CD8-positive, alpha-beta memory T cell (primary cell): ENCODE measurements at regions of chr11 and their contacts with region 1.

Region 1: DNA sequence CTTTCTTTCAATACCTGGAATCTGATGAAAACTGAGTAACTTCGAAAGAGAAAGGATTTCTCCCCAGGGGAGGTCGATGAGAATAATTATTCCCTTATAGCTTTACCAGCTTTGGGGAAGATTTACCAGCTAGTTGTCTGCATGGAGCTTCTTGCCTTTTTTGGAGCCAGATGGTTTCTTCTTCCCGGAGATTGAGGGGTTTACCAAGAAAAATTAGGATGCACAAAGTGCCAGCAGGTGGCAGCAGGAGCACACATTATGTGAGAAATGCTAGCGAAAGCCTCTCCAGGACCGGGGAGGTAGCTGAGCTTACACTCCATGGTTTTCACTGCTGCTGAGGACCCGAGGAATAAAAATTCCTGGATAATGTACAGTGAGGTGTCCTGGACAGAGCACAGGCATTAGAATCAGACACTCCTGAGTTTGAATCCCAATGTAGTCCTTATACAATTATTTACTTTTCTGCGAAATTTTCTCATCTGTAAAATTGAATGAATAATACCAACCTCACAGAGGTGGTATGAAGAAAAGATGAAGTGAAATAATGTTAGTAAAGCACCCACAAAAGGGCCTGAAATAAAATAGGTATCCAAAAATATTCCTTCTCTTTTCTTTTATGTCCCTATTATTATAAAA is 46.0 kb upstream of the PARVA start:
- DNase-seq: peak; percentile 50 to 77 (median 63)
- H3K4me3 ChIP-seq: no peak overlapping the region
- H3K4me3 Mint-ChIP-seq: no peak overlapping the region
- H3K27ac ChIP-seq: no peak overlapping the region
- H3K27ac Mint-ChIP-seq: no peak overlapping the region
- H3K4me1 ChIP-seq: no peaks in the 10 kb centered on the region
- H3K4me1 Mint-ChIP-seq: peaks cover 4 to 13% (median 5%) of the 10 kb centered on the region in 3 donors
- H3K27me3 ChIP-seq: no peaks in the 10 kb centered on the region
- H3K27me3 Mint-ChIP-seq: no peaks in the 10 kb centered on the region

Region 2: DNA sequence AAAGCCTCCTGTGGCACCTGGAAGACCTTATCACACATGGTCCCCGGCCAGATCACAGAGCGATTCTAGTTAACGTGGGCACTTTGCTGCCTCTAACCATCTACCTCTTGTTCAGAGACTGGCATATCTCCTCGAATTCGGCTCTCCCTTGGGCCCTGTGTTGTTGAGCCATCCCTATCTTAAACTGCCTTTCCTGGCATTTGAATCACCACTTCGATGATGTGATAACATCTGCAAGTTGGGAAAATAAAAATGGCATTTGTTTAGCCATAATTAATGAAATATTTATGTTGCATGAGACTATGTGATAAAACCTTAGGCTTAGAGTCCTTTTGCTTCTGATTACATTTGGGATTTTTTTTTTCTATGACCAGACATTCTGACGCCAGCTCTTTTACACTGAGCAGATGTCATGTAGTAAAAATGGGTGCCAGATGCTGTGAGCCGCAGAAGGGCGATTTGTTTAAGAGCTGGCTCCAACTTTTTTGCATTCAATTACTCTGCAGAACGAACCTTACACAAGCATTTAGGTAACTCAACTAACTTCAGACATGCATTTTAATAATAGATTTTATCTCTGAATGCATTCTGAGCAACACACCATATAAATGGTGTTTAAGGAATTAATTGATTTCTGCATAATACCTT is 12.4 kb before region 1 on chr11:
- CTCF ChIA-PET with region 1: interaction called, 12 read pairs
- POLR2A ChIA-PET with region 1: no interaction called
- DNase-seq: no peak
- H3K4me3 ChIP-seq: no peak overlapping the region
- H3K4me3 Mint-ChIP-seq: no peak overlapping the region
- H3K27ac ChIP-seq: no peak overlapping the region
- H3K27ac Mint-ChIP-seq: no peak overlapping the region
- H3K4me1 ChIP-seq: no peaks in the 10 kb centered on the region
- H3K4me1 Mint-ChIP-seq: peaks cover 6 to 12% (median 7%) of the 10 kb centered on the region in 3 donors
- H3K27me3 ChIP-seq: no peaks in the 10 kb centered on the region
- H3K27me3 Mint-ChIP-seq: peaks cover 2 to 6% of the 10 kb centered on the region in 2 donors

Region 3: DNA sequence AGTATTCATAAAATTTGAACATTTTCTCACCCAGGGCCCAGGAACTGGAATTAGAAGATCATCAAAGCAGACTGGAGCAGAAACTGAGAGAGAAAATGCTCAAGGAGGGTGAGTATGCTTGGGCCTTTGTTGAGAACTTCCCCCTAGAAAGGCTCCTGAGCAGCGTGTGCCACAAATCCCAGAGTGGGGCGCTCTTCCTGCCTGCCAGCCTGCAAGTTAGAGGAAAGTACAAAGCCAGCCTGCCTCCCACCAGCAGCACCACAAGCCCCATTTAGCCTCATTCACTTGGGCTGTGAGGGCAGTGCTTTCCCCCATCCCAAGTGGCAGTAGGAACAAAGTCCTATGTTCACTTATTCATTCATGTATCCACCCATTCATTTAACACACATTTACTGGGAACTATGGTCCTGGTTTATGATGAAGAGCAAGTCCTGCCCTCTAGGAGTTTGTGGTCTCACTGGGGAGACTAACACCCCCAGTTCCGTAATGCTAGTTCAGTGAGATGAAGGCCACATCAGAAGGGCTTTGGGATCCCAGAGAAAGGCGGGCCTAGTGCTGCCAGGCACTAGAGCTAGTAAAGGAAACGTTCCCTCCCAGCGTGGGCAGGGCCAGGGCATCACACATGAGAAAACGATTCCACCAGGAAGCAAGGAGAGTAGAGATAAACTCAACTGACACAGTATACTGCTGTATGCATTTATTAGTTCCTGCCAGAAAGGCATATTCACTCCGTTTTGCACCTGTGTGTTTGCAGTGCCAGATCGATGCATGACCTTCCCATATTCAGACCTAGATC is 23.6 kb after region 1 on chr11:
- CTCF ChIA-PET with region 1: interaction called, 12 read pairs
- POLR2A ChIA-PET with region 1: no interaction called
- DNase-seq: no peak
- H3K4me3 ChIP-seq: no peak overlapping the region
- H3K4me3 Mint-ChIP-seq: no peak overlapping the region
- H3K27ac ChIP-seq: no peak overlapping the region
- H3K27ac Mint-ChIP-seq: peak overlapping the region in 3 of 8 donors; percentile 25 to 52 (median 30)
- H3K4me1 ChIP-seq: peaks cover 24% of the 10 kb centered on the region
- H3K4me1 Mint-ChIP-seq: peaks cover 20 to 36% (median 35%) of the 10 kb centered on the region in 3 donors
- H3K27me3 ChIP-seq: no peaks in the 10 kb centered on the region
- H3K27me3 Mint-ChIP-seq: peaks cover 0 to 1% of the 10 kb centered on the region in 2 donors

Region 4: DNA sequence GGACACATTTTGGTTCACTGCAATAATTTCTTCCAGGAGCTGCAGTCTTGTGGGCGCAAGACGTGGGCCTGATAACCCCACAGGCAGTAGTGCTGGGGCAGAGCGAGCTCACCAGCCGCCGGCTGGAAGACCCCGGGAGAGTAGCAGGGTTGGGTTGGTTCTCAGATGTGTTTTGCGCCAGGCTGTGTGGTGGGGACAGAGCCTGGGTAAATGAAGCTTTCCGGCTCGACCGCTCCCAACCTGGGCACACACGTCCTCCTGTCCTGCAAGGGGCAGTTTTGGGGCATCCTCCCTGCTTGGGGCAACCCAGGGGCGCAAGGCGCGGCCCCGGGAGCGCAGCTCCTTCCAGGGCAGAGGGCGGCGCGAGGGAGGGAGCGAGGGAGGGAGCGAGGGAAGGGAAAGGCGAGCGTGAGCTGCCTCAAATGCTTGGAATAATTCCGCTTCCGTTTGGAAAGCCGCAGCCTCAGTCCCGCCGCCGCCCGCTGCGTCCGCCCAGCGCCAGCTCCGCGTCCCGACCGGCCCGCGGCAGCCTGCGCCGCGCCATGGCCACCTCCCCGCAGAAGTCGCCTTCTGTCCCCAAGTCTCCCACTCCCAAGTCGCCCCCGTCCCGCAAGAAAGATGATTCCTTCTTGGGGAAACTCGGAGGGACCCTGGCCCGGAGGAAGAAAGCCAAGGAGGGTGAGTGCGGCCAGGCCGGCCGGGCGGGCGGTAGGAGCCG is 45.9 kb after region 1 on chr11 and contains the start of gene PARVA:
- CTCF ChIA-PET with region 1: interaction called, 17 read pairs
- POLR2A ChIA-PET with region 1: no interaction called
- DNase-seq: no peak
- H3K4me3 ChIP-seq: peak within 1 kb of the TSS; percentile 41
- H3K4me3 Mint-ChIP-seq: peak within 1 kb of the TSS; percentile 77 to 90 (median 85)
- H3K27ac ChIP-seq: no peak within 1 kb of the TSS
- H3K27ac Mint-ChIP-seq: peak within 1 kb of the TSS; percentile 13 to 93 (median 78)
- H3K4me1 ChIP-seq: no peaks in the 10 kb centered on the region
- H3K4me1 Mint-ChIP-seq: peaks cover 14 to 19% (median 17%) of the 10 kb centered on the region in 3 donors
- H3K27me3 ChIP-seq: no peaks in the 10 kb centered on the region
- H3K27me3 Mint-ChIP-seq: peaks cover 22 to 45% of the 10 kb centered on the region in 2 donors
- total RNA-seq, gene PARVA: 0.07 to 0.18 TPM

Region 5: GRCh38 chr11:12813371-12814225 is 482.2 kb after region 1 on chr11:
- CTCF ChIA-PET with region 1: no interaction called
- POLR2A ChIA-PET with region 1: no interaction called
- DNase-seq: no peak
- H3K4me3 ChIP-seq: no peak overlapping the region
- H3K4me3 Mint-ChIP-seq: no peak overlapping the region
- H3K27ac ChIP-seq: no peak overlapping the region
- H3K27ac Mint-ChIP-seq: no peak overlapping the region
- H3K4me1 ChIP-seq: no peaks in the 10 kb centered on the region
- H3K4me1 Mint-ChIP-seq: peaks cover 0 to 7% (median 2%) of the 10 kb centered on the region in 3 donors
- H3K27me3 ChIP-seq: no peaks in the 10 kb centered on the region
- H3K27me3 Mint-ChIP-seq: peaks cover 20 to 52% of the 10 kb centered on the region in 2 donors

Region 6: DNA sequence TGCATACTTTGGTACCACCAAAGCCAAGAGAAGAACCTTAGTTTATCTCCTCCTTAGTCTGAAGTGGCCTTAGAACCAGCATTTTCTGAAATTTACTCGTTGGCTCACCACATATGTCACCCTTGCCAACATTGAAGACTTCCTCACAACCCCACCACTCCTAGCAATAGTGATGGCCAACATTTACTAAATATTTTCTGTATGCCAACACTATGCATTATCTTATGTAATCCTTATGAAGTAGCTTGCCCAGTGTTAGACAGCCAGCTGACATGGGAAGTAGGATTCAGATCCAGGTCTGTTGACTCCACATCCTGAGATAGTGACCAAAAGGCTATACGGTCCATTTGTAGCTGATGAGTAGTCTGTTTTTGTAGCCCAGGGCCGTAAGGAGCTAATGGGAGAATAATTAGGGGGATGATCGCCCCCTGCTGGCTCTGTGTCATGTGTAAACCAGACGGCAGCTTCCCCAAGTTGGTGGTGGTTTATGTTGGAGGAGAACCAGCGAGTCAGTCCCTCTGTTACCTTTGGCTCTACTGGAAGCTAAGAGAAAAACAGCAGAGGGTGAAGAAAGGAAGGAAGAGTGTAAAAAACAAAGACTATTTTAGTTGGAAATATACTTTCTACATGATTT is 557.3 kb after region 1 on chr11:
- CTCF ChIA-PET with region 1: interaction called, 66 read pairs
- POLR2A ChIA-PET with region 1: no interaction called
- DNase-seq: peak; percentile 26 to 58 (median 44)
- H3K4me3 ChIP-seq: no peak overlapping the region
- H3K4me3 Mint-ChIP-seq: no peak overlapping the region
- H3K27ac ChIP-seq: no peak overlapping the region
- H3K27ac Mint-ChIP-seq: no peak overlapping the region
- H3K4me1 ChIP-seq: no peaks in the 10 kb centered on the region
- H3K4me1 Mint-ChIP-seq: no peaks in the 10 kb centered on the region
- H3K27me3 ChIP-seq: no peaks in the 10 kb centered on the region
- H3K27me3 Mint-ChIP-seq: peaks cover 3 to 17% of the 10 kb centered on the region in 2 donors